GM18951 (cell line): ENCODE measurements at regions of chr18 and their contacts with region 1.

Region 1: GRCh38 chr18:43271593-43272432 is 5.5 kb downstream of the SYT4 start:
- POLR2A ChIP-seq: no peak

Region 2: GRCh38 chr18:42126586-42126985 is 1145.2 kb before region 1 on chr18:
- in situ Hi-C with region 1: loop called (anchors 10 kb)
- POLR2A ChIP-seq: no peak

Region 3: DNA sequence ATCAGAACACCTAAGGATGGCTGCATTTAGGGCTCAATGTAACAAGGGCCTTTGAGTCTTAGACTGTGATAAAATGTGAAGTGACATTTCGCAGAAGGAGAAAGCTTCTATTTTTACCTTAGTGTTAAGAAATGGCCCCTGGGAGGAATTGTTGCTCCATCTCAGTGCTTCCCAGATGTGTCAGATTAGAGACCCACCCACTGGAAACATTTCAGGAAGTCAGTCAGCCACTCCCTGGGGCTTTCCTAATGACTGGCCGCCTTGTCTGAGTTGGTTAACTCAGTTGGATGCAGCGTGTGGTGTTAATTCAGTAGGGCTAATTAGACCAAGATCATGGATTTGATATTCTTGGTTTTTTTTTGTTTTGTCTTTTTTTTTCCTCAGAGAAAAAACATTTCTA is 960.9 kb before region 1 on chr18:
- in situ Hi-C with region 1: loop called (anchors 25 kb)
- POLR2A ChIP-seq: no peak

Region 4: GRCh38 chr18:43031169-43031568 is 240.6 kb before region 1 on chr18:
- in situ Hi-C with region 1: no loop called
- POLR2A ChIP-seq: no peak